ENCODE measurements at regions of chr9 and their contacts with region 1.

Region 1: DNA sequence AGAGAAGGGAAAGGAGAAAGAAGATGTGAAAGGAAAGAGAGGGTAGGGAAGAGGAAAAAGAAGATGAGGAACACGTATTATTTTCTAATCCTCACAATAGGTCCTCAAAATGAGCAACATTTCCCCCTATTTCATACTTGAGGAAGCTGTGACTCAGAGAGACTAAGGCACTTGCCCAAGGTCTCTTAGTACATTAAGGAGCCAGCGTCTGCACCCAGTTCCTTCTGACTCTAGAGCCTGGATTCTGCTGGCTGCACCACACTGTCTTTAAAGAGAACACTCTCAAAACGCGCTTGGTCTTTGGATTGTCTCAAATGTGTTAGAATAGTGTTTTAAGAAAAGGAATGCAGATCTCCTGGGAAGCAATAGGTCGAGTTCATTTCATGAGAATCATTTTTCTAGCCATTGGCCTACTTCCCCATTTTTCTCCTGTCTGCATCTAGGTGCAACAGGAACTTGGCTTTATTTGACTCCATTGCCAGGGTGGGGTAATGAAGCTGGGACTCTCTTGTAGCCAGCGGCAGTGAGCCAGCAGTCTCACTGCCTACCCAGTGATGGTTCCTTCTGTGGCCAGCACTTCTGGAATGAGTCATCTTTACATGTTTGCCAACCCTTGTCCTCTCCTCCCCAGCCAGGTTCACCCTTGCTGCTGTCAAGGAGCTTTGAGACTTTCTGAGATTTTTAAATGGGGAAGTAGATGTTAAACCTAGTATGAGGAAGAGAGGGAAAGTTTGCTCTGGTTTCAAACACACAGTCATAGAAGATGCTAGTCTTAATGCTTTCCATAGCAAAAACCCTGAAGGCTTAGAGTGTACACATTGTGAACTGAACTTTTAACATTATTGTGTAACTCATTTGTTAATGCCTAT is 82.7 kb downstream of the DOCK8 start:
- DNase-seq: peak; percentile 25
- H3K4me3 Mint-ChIP-seq: no peak overlapping the region
- H3K27ac Mint-ChIP-seq: peak overlapping the region; percentile 36
- H3K4me1 Mint-ChIP-seq: peaks cover 45% of the 10 kb centered on the region
- H3K27me3 Mint-ChIP-seq: no peaks in the 10 kb centered on the region

Region 2: DNA sequence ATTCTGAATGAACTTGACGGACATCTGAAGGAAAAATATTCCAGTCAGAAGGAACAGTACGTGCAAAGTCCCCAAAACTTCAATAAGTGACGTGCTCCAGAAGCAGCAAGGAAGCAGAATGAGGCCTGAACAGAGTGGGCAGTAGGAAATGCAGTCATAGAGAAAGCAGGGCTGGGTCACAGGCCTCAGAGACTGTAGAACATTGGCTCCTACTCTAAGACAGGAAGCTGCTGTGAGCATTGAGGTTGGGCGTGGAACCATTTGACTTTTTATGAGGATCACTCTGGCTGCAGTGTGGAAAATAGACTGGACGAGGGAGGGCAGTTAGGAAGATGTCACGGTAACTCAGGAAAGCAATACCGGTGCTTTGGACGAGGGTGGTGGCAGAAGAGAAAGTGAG is 18.7 kb before region 1 on chr9:
- CTCF ChIA-PET with region 1: no interaction called
- intact Hi-C with region 1: loop called (anchors 2 kb)
- DNase-seq: peak; percentile 78
- H3K4me3 Mint-ChIP-seq: no peak overlapping the region
- H3K27ac Mint-ChIP-seq: no peak overlapping the region
- H3K4me1 Mint-ChIP-seq: peaks cover 42% of the 10 kb centered on the region
- H3K27me3 Mint-ChIP-seq: no peaks in the 10 kb centered on the region

Region 3: GRCh38 chr9:459491-460444 is 162.4 kb after region 1 on chr9:
- CTCF ChIA-PET with region 1: no interaction called
- intact Hi-C with region 1: no loop called
- DNase-seq: no peak
- H3K4me3 Mint-ChIP-seq: no peak overlapping the region
- H3K27ac Mint-ChIP-seq: peak overlapping the region; percentile 72
- H3K4me1 Mint-ChIP-seq: peaks cover 5% of the 10 kb centered on the region
- H3K27me3 Mint-ChIP-seq: no peaks in the 10 kb centered on the region